Mammary epithelial cell (primary cell): ENCODE measurements at regions of chr1 and their contacts with region 1.

Region 1: DNA sequence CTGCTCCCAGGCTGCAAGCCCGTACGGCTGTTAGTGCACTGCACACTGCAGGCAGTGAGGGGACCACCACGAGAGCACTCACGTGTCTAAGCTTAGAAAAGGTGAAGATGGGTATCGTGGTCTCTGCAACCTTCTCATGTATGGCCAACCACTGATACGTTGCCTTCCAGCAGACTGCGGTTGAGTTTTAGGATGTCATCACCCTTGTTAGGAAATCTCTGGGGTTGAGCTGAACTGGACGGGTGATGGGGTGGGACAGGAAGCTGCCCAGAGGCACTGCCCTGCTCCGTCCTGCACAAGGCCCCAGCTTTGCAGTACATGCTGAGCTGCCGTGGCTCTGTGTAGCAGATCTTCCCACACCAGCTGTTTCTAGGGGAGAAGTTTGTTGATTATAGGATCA is 43.3 kb downstream of the FAAP20 start:
- DNase-seq: no peak
- H3K4me3 ChIP-seq: no peak overlapping the region
- H3K27ac ChIP-seq: no peak overlapping the region
- H3K4me1 ChIP-seq: no peaks in the 10 kb centered on the region
- H3K27me3 ChIP-seq: no peaks in the 10 kb centered on the region
- CTCF ChIP-seq: no peak

Region 2: DNA sequence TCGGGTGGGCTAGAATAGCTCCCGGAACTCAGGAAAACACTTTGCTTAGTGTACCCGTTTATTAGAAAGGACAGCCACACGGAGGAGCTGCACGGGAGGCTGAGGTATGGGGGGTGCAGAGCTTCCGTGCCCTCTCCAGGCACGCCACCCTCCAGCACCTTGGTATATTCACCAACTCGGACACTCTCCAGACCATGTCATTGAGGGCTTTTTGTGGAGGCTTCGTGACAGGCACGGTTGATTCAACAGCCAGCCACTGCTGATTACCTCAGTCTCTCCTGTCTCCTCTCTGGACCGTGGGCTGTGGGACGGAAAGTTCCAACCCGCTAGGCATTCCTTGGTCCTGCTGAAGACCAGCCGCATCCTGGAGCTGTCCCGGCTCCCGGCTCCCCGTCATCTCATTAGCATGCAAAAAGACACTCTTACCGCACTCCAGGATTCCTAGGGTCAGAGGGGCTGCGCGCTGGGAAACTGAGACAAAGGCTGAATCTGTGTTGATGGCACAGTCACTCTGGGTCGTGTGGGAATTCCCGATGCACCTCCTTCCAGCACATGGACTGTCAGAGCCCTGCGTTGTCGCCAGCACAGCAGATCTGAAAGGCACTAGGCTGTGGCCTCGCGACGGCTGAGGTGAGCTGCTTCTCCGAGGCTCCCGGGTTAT is 35.4 kb before region 1 on chr1:
- CTCF ChIA-PET with region 1: no interaction called
- dilution Hi-C with region 1: no loop called
- in situ Hi-C with region 1: no loop called
- intact Hi-C with region 1: no loop called
- DNase-seq: no peak
- H3K4me3 ChIP-seq: no peak overlapping the region
- H3K27ac ChIP-seq: no peak overlapping the region
- H3K4me1 ChIP-seq: no peaks in the 10 kb centered on the region
- H3K27me3 ChIP-seq: no peaks in the 10 kb centered on the region
- CTCF ChIP-seq: no peak

Region 3: DNA sequence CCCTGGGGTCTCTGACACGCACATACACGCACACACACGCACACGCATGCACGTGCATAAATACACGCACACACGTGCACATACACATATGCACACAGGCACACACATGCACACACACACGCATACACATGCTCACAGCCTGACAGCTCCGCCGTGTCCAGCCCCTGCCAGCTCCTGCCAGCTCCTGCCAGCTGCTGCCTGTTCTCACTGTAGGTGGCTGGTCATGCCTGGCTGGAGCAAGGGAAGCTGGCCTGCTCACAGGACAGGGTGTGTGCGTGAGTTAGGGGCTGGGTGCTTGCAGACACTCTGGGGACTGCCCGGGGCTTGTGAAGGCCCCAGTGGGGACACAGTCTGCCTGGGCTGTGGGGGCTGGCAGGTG is 329.7 kb after region 1 on chr1:
- CTCF ChIA-PET with region 1: no interaction called
- dilution Hi-C with region 1: loop called (anchors 10 kb)
- in situ Hi-C with region 1: no loop called
- intact Hi-C with region 1: no loop called
- DNase-seq: no peak
- H3K4me3 ChIP-seq: no peak overlapping the region
- H3K27ac ChIP-seq: no peak overlapping the region
- H3K4me1 ChIP-seq: no peaks in the 10 kb centered on the region
- H3K27me3 ChIP-seq: no peaks in the 10 kb centered on the region
- CTCF ChIP-seq: no peak